PC-3 (cell line): ENCODE measurements at regions of chr3 and their contacts with region 1.

Region 1: GRCh38 chr3:119145500-119146191 is at the start of gene TEX55:
- DNase-seq: peak; percentile 87
- ATAC-seq: peak; percentile 75
- H3K4me3 ChIP-seq: no peak within 1 kb of the TSS
- H3K27ac ChIP-seq: peak within 1 kb of the TSS; percentile 2; the same call in 1 of the 2 replicates
- H3K4me1 ChIP-seq: peaks cover 25% of the 10 kb centered on the region
- H3K27me3 ChIP-seq: no peaks in the 10 kb centered on the region
- CTCF ChIP-seq: peak; percentile 94
- total RNA-seq, gene TEX55: 0.33 TPM in 1 of 2 replicates, not detected in the other

Region 2: GRCh38 chr3:118754406-118755252 is 391.0 kb before region 1 on chr3:
- CTCF ChIA-PET with region 1: no interaction called
- POLR2A ChIA-PET with region 1: no interaction called
- intact Hi-C with region 1: no loop called
- DNase-seq: no peak
- ATAC-seq: no peak
- H3K4me3 ChIP-seq: no peak overlapping the region
- H3K27ac ChIP-seq: no peak overlapping the region
- H3K4me1 ChIP-seq: no peaks in the 10 kb centered on the region
- H3K27me3 ChIP-seq: no peaks in the 10 kb centered on the region
- CTCF ChIP-seq: no peak

Region 3: DNA sequence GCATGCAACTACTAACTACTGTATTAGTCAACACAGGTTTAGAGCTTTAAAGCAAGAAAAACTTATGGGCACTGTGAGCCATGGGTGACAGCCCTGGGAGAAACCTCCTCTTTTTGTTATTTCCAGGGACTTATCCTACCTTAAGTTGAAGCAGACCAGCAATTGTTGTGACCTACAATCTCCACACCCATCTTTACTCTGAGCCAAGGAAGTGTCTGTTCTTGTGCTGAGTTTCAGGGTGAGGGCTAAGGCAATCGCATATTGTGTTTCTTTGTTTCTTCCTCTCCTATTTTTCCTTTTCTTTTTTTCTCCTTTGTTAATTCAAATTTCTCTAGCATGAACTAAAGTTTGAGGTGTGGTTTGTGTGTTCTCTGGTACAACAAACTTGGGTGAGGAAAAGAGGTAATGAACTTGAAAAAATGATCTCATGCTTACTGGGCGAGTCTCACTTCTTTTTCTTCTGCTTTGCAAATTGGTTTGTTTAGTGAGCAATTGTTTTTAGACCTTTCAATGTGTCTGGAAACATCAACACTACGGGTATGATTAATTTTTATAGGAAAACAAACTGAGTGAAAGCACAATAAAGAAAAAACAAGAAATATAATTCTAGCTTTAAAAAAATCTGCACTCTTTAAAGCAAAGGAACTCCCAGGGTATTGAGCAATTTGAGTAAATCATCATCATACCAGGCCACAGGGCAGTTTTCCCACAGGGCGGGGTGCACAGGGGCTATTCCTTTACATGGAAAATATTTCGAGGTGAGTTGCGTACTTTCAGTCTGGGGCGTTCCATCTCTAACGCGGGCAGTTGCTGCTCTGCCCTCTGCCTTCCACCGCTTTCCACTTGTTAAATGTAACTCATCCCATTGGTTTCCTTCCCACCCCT is 30.5 kb after region 1 on chr3:
- CTCF ChIA-PET with region 1: no interaction called
- POLR2A ChIA-PET with region 1: no interaction called
- intact Hi-C with region 1: loop called (anchors 2 kb)
- DNase-seq: peak; percentile 87
- ATAC-seq: peak; percentile 73
- H3K4me3 ChIP-seq: peak overlapping the region; percentile 26; the same call in 1 of the 2 replicates
- H3K27ac ChIP-seq: peak overlapping the region; percentile 92
- H3K4me1 ChIP-seq: peaks cover 34% of the 10 kb centered on the region
- H3K27me3 ChIP-seq: no peaks in the 10 kb centered on the region
- CTCF ChIP-seq: no peak